OCI-LY7 (cell line): ENCODE measurements at regions of chr7 and their contacts with region 1.

Region 1: GRCh38 chr7:38335492-38336147 is 62.2 kb upstream of the TARP start:
- DNase-seq: peak; percentile 86
- H3K4me3 ChIP-seq: no peak overlapping the region
- H3K27ac ChIP-seq: no peak overlapping the region
- H3K4me1 ChIP-seq: peaks cover 32% of the 10 kb centered on the region
- CTCF ChIP-seq: peak; percentile 95

Region 2: DNA sequence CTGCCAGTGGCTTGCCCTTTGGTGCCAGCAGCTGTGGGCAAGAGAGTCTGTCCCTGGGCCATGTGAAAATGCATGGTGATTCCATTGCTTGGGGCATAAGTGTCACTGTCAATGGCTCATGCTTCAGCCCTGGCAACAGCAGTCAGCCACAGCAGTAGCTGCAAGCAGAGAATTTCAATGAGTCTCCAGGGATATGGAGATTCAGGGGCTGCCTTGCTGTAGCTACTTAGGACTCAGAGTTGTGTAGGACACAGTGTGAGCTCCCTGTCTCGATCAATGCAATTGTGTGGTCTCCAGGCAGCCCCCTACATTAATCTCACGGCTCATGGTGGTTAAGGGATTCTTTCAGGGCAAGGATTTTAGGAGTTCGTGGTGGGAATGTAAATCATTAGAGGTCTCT is 283.8 kb before region 1 on chr7:
- CTCF ChIA-PET with region 1: no interaction called
- POLR2A ChIA-PET with region 1: no interaction called
- intact Hi-C with region 1: no loop called
- DNase-seq: no peak
- H3K4me3 ChIP-seq: no peak overlapping the region
- H3K27ac ChIP-seq: no peak overlapping the region
- H3K4me1 ChIP-seq: no peaks in the 10 kb centered on the region
- CTCF ChIP-seq: no peak

Region 3: GRCh38 chr7:38178004-38178694 is 157.5 kb before region 1 on chr7 and contains the start of gene STARD3NL:
- CTCF ChIA-PET with region 1: interaction called, 4 read pairs
- POLR2A ChIA-PET with region 1: interaction called, 3 read pairs
- intact Hi-C with region 1: loop called (anchors 5 kb)
- DNase-seq: peak; percentile 100
- H3K4me3 ChIP-seq: peak within 1 kb of the TSS; percentile 96
- H3K27ac ChIP-seq: no peak within 1 kb of the TSS
- H3K4me1 ChIP-seq: peaks cover 11% of the 10 kb centered on the region
- CTCF ChIP-seq: no peak
- total RNA-seq, gene STARD3NL: 16.3 and 17.6 TPM in 2 replicates

Region 4: GRCh38 chr7:38215735-38216670 is 119.6 kb before region 1 on chr7:
- CTCF ChIA-PET with region 1: interaction called, 9 read pairs
- POLR2A ChIA-PET with region 1: interaction called, 3 read pairs
- intact Hi-C with region 1: loop called (anchors 1 kb)
- DNase-seq: peak; percentile 71
- H3K4me3 ChIP-seq: no peak overlapping the region
- H3K27ac ChIP-seq: no peak overlapping the region
- H3K4me1 ChIP-seq: no peaks in the 10 kb centered on the region
- CTCF ChIP-seq: peak; percentile 96

Region 5: DNA sequence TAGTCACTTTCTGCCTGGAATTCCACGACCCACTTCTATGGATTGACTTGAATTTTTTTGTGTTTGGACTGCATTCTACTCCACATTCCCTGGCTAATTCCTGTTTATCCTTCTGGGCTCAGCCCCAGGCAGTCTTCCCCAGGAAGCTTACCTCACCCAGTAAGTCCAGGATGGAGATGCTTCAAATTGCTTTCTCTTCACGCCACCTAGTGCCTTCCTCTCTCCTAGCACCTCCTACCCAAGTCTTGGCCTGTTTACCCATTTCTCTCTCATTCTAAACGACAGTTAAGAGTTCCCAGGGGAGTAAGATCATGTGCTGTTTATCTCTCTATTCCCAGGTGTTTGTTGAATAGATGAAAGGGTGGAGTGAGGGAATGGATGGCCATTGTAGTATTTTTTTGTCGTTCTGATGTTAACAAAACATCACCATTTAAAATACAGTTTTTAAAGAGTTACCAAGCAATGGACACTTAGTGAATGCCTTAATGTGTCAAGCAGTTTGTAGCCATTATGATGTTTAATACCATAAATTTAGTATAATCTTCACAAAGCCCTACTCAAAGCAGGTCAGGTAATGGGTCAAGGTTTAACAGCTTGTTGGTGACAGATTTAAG is 16.7 kb before region 1 on chr7:
- CTCF ChIA-PET with region 1: interaction called, 10 read pairs
- POLR2A ChIA-PET with region 1: interaction called, 5 read pairs
- intact Hi-C with region 1: no loop called
- DNase-seq: peak; percentile 88
- H3K4me3 ChIP-seq: no peak overlapping the region
- H3K27ac ChIP-seq: peak overlapping the region; percentile 53
- H3K4me1 ChIP-seq: peaks cover 22% of the 10 kb centered on the region
- CTCF ChIP-seq: peak; percentile 89

Region 6: GRCh38 chr7:38360776-38361175 is 25.2 kb after region 1 on chr7:
- CTCF ChIA-PET with region 1: interaction called, 23 read pairs
- POLR2A ChIA-PET with region 1: interaction called, 4 read pairs
- intact Hi-C with region 1: no loop called
- DNase-seq: no peak
- H3K4me3 ChIP-seq: peak overlapping the region; percentile 66
- H3K27ac ChIP-seq: no peak overlapping the region
- H3K4me1 ChIP-seq: peaks cover 54% of the 10 kb centered on the region
- CTCF ChIP-seq: no peak

Region 7: GRCh38 chr7:38411404-38411803 is 75.8 kb after region 1 on chr7:
- CTCF ChIA-PET with region 1: no interaction called
- POLR2A ChIA-PET with region 1: no interaction called
- intact Hi-C with region 1: no loop called
- DNase-seq: peak; percentile 9
- H3K4me3 ChIP-seq: no peak overlapping the region
- H3K27ac ChIP-seq: no peak overlapping the region
- H3K4me1 ChIP-seq: no peaks in the 10 kb centered on the region
- CTCF ChIP-seq: peak; percentile 59